Cardiac septum (tissue), 1 donor: ENCODE measurements at regions of chr5 and their contacts with region 1.

Region 1: DNA sequence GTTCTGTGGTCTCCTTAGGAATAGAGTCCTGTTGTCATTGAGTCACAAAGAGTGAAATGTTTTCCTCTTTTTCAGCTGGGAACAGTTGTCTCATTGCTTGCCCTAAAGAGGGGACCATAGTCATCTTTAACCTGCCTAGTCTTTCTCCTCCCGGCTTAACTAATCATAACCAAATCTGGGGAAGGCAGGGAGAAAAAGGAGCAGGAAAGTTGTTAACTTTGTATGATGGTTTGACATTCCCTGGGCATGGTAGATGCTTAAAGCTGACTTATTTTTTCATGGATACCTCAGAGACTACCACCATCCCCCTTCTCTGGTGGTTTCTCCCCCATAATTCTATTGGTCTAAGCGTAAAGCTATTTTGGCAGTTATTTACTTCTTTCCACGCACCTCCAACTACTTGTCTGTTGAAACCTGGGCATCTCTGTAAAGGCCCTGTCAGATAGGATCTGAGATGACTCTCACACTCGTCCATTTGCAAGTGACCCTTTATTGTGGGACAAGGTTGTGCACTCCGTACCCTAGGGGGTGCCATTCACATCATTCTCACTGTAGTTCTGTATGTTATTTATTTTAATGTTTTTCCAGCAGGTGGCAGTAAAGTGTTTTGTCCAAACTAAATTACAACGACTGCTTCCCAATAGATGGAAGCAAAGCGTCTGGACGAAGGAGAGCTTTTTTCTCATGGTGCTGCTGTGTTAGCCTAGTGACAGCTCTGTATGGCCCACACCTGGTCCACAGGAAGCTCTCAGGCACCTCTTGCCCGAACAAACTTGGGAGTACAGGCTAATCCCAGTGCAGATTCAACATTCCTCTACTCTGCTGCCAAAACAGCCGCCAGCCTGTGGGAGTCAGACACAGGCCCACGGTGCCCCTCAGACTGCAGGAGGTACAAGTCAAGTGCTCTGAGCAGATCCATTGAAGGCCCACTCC is 3.0 kb upstream of the FAM13B start:
- DNase-seq: no peak

Region 2: GRCh38 chr5:137778772-137779564 is 256.9 kb before region 1 on chr5:
- intact Hi-C with region 1: loop called (anchors 5 kb)
- DNase-seq: no peak

Region 3: DNA sequence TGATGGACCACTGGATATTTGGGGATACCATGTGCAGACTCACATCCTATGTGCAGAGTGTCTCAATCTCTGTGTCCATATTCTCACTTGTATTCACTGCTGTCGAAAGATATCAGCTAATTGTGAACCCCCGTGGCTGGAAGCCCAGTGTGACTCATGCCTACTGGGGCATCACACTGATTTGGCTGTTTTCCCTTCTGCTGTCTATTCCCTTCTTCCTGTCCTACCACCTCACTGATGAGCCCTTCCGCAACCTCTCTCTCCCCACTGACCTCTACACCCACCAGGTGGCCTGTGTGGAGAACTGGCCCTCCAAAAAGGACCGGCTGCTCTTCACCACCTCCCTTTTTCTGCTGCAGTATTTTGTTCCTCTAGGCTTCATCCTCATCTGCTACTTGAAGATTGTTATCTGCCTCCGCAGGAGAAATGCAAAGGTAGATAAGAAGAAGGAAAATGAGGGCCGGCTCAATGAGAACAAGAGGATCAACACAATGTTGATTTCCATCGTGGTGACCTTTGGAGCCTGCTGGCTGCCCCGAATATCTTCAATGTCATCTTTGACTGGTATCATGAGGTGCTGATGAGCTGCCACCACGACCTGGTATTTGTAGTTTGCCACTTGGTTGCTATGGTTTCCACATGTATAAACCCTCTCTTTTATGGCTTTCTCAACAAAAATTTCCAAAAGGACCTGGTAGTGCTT is 227.2 kb before region 1 on chr5:
- intact Hi-C with region 1: loop called (anchors 2 kb)
- DNase-seq: no peak

Region 4: DNA sequence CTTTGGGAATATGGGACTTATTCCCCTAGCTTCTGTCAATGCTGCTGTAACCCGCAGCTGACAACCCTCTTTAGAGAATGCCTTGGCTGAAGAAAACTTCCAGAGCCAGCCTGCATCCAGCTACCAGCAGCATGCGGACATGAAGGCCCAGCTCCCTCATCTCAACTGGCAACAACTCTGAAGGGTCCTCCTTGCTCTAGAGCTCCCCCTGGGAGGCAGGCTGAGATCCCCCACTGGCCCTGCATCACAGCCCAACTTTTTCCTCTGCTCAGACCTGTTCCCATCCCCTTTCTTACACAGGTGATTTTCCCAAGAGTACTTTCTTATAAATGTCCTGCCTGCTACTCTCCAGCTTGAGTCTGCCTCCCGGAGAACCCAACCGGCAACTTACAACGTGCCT is 29.2 kb after region 1 on chr5:
- intact Hi-C with region 1: loop called (anchors 1 kb)
- DNase-seq: no peak

Region 5: DNA sequence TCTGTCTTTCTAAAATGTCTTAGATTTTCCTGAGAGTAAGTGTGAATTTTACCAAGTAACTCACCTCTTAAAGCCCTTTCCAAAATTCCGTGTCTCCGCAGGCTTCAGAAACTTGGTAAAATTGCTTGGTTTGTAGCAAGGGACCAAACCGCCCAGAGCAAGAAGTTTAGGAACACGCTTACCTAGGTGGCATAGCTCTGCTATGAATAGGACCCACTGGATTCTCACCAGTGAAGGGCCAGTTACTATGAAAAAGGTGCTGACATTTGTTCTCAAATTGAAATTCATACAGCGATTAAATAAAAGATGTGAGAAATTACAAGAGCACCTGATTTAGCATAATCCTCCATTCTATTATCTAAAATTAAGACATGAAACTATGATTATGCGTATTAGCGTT is 96.7 kb after region 1 on chr5:
- intact Hi-C with region 1: loop called (anchors 5 kb)
- DNase-seq: no peak